ENCODE measurements at regions of chr18 and their contacts with region 1.

Region 1: DNA sequence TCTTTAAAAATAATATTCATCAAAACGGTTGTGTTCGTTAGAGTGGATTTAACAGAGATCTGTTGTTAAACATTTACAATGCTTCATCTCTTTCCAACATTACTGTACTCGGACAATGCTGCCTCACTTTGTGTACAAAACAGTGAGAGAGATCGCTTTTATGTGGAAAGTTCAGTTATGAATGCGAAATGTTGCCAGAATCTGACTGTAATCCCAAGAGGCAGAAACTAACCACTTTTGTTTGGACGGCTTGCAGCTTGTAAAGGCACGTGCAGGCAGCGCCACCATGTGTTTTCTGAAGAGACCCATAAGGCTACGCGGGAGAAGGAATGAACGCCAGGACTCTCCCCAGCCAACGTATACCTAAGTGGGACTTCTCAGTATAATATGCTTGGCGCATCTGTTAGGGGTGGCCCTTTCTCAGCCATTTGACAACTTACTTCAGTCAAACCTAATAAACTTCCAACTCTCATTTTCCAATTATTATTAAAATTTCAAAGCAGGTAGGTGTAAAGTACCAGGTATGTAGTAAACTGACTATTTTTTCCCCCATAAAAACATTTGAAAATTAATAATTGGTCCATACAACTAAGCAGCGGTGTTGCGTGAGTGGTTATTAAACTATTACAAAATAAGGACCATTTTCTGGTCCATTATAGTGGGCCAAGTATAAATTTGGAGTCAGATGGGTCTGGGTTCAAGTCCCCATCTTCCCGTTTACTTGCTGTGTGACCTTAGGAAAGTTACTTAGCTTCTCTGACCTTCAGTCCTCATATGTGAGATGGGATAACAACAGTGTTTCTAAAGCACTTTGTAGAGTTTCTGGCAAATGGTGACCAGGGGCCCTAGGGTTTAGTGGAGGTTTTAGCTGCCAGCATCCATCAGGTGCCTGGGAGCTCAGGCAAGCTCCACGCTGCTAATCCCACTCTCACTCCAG is 5.6 kb upstream of the NAPG start:
- DNase-seq: peak; percentile 84 to 89 (median 85)
- ATAC-seq: peak; percentile 74 to 90 (median 86)
- H3K4me3 ChIP-seq: peak overlapping the region in 1 of 12 donors; percentile 5
- H3K27ac ChIP-seq: peak overlapping the region in 3 of 12 donors; percentile 6 to 17 (median 10)
- H3K4me1 ChIP-seq: peaks cover 0 to 27% (median 20%) of the 10 kb centered on the region in 12 donors
- H3K27me3 ChIP-seq: no peaks in the 10 kb centered on the region
- CTCF ChIP-seq: peak; percentile 67 to 92 (median 86)
- POLR2A ChIP-seq: no peak

Region 2: DNA sequence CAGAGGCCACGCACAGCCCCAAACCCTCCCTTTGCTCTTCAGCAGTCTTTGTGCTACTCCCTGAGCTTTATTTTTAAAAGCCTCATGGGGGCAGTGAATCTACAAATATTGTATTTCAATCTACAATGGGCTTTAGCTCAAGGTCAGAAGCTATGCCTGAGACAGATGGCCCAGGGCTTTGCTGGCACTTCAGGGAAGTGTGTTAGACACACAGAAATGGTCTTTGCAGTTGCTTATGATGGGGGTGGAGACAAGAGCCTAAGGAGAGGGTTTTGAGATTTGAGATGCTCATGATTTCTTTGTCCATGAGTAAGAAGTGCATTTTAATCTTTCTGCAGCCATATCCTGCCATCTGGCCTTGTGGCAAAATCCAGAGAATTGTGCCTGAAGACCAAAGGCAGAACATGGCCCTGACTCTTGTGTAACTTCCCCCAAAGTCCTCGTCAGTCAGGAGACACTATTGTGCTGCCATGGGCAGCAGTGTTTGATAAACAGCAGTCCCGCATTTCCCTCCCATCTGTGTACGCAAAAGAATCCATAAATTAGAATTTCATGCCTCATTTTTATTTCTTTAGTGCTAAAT is 513.9 kb before region 1 on chr18:
- intact Hi-C with region 1: loop called in 7 of 10 experiments (anchors 5 to 10 kb)
- DNase-seq: no peak
- ATAC-seq: peak in 3 of 4 donors; percentile 29 to 41 (median 39)
- H3K4me3 ChIP-seq: no peak overlapping the region
- H3K27ac ChIP-seq: no peak overlapping the region
- H3K4me1 ChIP-seq: peaks cover 0 to 30% (median 18%) of the 10 kb centered on the region in 12 donors
- H3K27me3 ChIP-seq: no peaks in the 10 kb centered on the region
- CTCF ChIP-seq: peak in 8 of 12 donors; percentile 10 to 47 (median 36)
- POLR2A ChIP-seq: no peak

Region 3: GRCh38 chr18:10032331-10033015 is 487.8 kb before region 1 on chr18:
- intact Hi-C with region 1: loop called in 2 of 10 experiments (anchors 5 to 10 kb)
- DNase-seq: peak in 1 of 5 donors; percentile 49
- ATAC-seq: peak; percentile 28 to 81 (median 78)
- H3K4me3 ChIP-seq: peak overlapping the region in 10 of 12 donors; percentile 0 to 51 (median 38)
- H3K27ac ChIP-seq: peak overlapping the region in 7 of 12 donors; percentile 2 to 70 (median 37)
- H3K4me1 ChIP-seq: peaks cover 0 to 30% (median 10%) of the 10 kb centered on the region in 12 donors
- H3K27me3 ChIP-seq: no peaks in the 10 kb centered on the region
- CTCF ChIP-seq: peak; percentile 39 to 69 (median 54)
- POLR2A ChIP-seq: no peak

Region 4: GRCh38 chr18:10100941-10101701 is 419.1 kb before region 1 on chr18:
- intact Hi-C with region 1: loop called in 2 of 10 experiments (anchors 10 kb)
- DNase-seq: peak in 2 of 5 donors; percentile 37 to 42
- ATAC-seq: peak; percentile 61 to 80 (median 65)
- H3K4me3 ChIP-seq: no peak overlapping the region
- H3K27ac ChIP-seq: no peak overlapping the region
- H3K4me1 ChIP-seq: peaks cover 0 to 20% (median 7%) of the 10 kb centered on the region in 12 donors
- H3K27me3 ChIP-seq: no peaks in the 10 kb centered on the region
- CTCF ChIP-seq: peak in 1 of 12 donors; percentile 17
- POLR2A ChIP-seq: no peak

Region 5: DNA sequence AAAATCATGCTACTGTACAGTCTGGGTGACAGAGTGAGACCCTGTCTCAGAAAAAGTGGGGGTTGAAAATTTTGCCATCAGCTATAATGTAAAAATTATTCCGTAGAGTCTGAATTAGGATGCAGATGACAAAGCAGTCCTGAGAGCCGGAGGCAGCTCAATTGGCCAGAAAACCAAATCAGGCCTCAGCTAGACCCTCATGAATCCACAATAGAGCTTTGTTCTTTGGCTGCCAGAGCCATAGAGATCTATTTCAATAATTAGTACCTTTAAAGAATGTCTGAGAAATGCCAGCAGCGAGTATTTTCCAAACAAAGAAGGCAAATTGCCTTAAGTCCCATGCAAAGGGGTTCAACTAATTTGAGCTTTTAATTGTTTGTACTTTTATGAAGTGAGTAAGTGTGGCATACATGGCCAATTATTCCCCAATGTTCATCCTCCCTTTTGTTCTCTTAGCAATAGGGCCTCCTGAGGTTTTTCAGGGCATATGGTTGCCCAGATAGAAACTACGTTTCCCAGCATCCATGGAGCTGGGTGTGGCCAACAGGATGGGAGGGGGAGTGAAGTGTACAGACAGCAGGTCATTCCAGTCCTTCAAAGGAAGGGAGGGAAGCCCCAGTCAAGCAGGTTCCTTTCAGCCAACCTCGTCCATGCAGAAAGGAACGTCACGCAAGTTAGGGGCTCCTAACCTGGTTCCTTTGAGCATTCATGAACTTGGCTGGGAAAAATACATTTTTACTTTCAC is 277.2 kb before region 1 on chr18:
- intact Hi-C with region 1: loop called in 2 of 10 experiments (anchors 10 kb)
- DNase-seq: no peak
- ATAC-seq: no peak
- H3K4me3 ChIP-seq: no peak overlapping the region
- H3K27ac ChIP-seq: no peak overlapping the region
- H3K4me1 ChIP-seq: peaks cover 0 to 40% (median 20%) of the 10 kb centered on the region in 12 donors
- H3K27me3 ChIP-seq: peaks cover 0 to 5% (median 0%) of the 10 kb centered on the region in 9 donors
- CTCF ChIP-seq: no peak
- POLR2A ChIP-seq: no peak

Region 6: DNA sequence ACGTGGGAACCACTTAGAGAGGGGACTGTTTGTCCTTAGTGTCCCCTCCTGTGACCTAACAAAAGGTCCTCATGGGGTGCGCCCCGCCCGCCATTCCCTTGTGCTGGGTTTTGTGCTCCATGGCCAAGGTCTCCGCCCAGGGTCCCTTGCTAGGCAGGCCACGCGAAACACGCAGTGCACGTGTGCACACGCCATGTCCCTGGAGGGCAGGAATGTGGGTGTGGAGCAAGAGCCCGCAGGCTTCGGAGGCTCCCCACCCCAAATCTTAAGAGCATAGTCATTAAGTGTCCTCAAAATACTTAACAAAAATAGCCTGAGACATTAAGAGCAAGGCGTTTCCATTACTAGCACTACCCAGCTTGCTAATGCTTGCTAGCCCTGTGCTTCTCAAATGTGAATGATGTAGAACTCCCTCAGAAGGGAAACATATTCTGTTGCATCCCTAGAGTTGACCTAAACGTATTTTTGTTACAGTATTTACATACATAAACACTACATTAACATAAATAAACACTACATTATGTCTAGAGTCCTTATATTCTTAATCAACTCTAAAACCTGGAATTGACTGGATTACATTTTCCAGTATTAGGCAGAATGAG is 183.4 kb before region 1 on chr18:
- intact Hi-C with region 1: loop called in 1 of 10 experiments (anchors 10 kb)
- DNase-seq: no peak
- ATAC-seq: no peak
- H3K4me3 ChIP-seq: no peak overlapping the region
- H3K27ac ChIP-seq: no peak overlapping the region
- H3K4me1 ChIP-seq: no peaks in the 10 kb centered on the region
- H3K27me3 ChIP-seq: no peaks in the 10 kb centered on the region
- CTCF ChIP-seq: no peak
- POLR2A ChIP-seq: no peak

Region 7: DNA sequence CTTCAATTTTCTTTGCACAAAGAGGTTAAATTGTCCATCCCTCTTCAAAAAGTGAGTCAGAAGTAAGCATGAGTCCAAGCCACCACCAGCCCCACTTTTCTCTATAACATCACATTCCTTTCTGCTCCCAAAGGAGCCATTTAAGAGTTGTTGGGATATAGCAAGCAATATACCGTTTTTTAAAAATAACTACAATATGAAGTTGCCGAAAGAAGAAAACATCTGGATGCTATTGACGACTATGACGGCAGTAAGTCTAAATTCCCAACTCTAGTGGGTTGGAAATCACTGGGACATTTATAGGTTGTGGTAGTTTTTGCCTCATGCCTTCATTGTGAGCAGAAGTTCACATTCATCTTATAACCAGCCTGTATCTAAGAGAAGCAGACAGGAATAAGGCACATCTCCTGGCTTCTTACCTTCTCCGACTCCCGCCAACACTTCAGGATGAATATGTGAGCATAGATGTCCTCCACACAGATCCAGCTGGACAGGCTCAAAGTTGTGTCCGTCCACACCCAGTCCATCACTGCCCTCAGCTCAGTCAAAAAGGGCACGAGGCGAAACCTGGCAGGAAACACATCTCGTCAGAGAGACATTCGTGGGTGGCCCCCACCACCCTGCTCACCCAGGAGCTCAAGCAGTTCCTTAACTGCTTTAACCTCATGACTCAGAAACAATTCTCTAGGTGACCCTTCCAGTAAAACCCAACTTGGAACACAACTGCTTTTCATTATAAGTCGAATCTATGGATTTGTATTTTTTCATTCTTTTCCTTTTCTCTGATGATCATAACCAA is 169.2 kb after region 1 on chr18:
- intact Hi-C with region 1: no loop called
- DNase-seq: no peak
- ATAC-seq: no peak
- H3K4me3 ChIP-seq: no peak overlapping the region
- H3K27ac ChIP-seq: no peak overlapping the region
- H3K4me1 ChIP-seq: no peaks in the 10 kb centered on the region
- H3K27me3 ChIP-seq: no peaks in the 10 kb centered on the region
- CTCF ChIP-seq: no peak
- POLR2A ChIP-seq: no peak

Measured in heart left ventricle (tissue), 16 donors.